ENCODE measurements at regions of chr9 and their contacts with region 1.

Region 1: GRCh38 chr9:5437254-5438216 is at the start of gene PLGRKT:
- DNase-seq: peak; percentile 97 to 98
- ATAC-seq: peak; percentile 99
- H3K4me3 ChIP-seq: peak within 1 kb of the TSS; percentile 30 to 66
- H3K27ac ChIP-seq: peak within 1 kb of the TSS; percentile 1 to 86
- H3K4me1 ChIP-seq: no peaks in the 10 kb centered on the region
- H3K27me3 ChIP-seq: no peaks in the 10 kb centered on the region
- total RNA-seq, gene PLGRKT: 8.8 to 10.6 TPM

Region 2: DNA sequence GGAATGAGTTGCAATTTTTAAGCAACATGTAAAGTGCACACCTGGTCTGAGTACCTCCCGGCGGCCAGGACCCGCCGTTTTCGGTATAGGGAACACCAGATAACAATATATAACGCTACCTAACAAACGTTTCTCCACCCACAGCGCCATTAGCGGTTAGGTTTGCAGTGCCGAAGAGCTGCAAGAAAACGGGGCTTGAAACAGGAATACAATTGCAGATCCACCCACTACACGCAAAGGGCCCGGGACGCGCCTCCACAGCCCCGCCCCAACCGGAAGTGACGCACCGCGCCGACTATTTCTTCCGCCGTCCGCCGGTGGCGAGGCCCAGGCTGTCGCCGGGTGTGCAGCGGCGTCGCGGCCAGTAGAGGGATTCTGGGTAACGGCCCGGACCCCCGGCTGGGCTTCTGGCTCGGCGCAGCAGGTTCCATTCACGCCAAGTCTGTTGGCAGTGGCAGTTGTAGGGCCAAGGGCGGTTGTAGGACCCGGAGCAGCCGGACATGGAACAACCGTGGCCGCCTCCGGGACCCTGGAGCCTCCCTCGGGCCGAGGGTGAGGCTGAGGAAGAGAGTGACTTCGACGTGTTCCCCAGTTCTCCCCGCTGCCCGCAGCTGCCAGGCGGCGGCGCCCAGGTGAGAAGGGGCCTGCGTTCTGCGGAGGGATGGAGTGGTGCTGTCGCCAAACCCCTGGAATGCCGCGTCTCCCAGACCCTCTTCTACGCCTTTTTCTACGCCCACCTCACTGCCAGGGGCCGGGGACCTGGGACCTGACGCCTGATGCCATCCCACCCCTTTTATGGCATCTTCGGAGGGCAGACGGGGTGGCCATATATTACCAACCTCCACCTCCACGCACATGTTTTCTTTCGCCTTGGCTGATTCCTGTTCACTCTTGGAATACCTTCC is 758.0 kb before region 1 on chr9 and contains the start of gene CDC37L1:
- intact Hi-C with region 1: loop called in 1 of 2 experiments (anchors 10 kb)
- DNase-seq: peak; percentile 99 to 100
- ATAC-seq: peak; percentile 99
- H3K4me3 ChIP-seq: peak within 1 kb of the TSS; percentile 93 to 94
- H3K27ac ChIP-seq: peak within 1 kb of the TSS; percentile 91 to 98
- H3K4me1 ChIP-seq: no peaks in the 10 kb centered on the region
- H3K27me3 ChIP-seq: no peaks in the 10 kb centered on the region
- total RNA-seq, gene CDC37L1: 19.5 to 26.3 TPM

Region 3: GRCh38 chr9:5586391-5586802 is 148.9 kb after region 1 on chr9:
- intact Hi-C with region 1: loop called in 1 of 2 experiments (anchors 5 kb)
- DNase-seq: no peak
- ATAC-seq: no peak
- H3K4me3 ChIP-seq: no peak overlapping the region
- H3K27ac ChIP-seq: no peak overlapping the region
- H3K4me1 ChIP-seq: no peaks in the 10 kb centered on the region
- H3K27me3 ChIP-seq: no peaks in the 10 kb centered on the region

Measured in aorta (tissue), 5 donors.